Activated CD4-positive, alpha-beta T cell treated with anti-CD3 and anti-CD28 coated beads for 36 hours (primary cell): ENCODE measurements at regions of chr7 and their contacts with region 1.

Region 1: DNA sequence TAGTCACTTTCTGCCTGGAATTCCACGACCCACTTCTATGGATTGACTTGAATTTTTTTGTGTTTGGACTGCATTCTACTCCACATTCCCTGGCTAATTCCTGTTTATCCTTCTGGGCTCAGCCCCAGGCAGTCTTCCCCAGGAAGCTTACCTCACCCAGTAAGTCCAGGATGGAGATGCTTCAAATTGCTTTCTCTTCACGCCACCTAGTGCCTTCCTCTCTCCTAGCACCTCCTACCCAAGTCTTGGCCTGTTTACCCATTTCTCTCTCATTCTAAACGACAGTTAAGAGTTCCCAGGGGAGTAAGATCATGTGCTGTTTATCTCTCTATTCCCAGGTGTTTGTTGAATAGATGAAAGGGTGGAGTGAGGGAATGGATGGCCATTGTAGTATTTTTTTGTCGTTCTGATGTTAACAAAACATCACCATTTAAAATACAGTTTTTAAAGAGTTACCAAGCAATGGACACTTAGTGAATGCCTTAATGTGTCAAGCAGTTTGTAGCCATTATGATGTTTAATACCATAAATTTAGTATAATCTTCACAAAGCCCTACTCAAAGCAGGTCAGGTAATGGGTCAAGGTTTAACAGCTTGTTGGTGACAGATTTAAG is 45.5 kb upstream of the TARP start:
- DNase-seq: peak; percentile 22
- ATAC-seq: peak; percentile 77
- H3K4me3 Mint-ChIP-seq: no peak overlapping the region
- H3K27ac Mint-ChIP-seq: no peak overlapping the region
- H3K4me1 Mint-ChIP-seq: peaks cover 18% of the 10 kb centered on the region
- H3K27me3 Mint-ChIP-seq: no peaks in the 10 kb centered on the region

Region 2: GRCh38 chr7:38107486-38107893 is 211.4 kb before region 1 on chr7:
- CTCF ChIA-PET with region 1: no interaction called
- POLR2A ChIA-PET with region 1: no interaction called
- intact Hi-C with region 1: loop called (anchors 2 kb)
- DNase-seq: peak; percentile 80
- ATAC-seq: peak; percentile 85
- H3K4me3 Mint-ChIP-seq: no peak overlapping the region
- H3K27ac Mint-ChIP-seq: no peak overlapping the region
- H3K4me1 Mint-ChIP-seq: no peaks in the 10 kb centered on the region
- H3K27me3 Mint-ChIP-seq: peaks cover 16% of the 10 kb centered on the region

Region 3: DNA sequence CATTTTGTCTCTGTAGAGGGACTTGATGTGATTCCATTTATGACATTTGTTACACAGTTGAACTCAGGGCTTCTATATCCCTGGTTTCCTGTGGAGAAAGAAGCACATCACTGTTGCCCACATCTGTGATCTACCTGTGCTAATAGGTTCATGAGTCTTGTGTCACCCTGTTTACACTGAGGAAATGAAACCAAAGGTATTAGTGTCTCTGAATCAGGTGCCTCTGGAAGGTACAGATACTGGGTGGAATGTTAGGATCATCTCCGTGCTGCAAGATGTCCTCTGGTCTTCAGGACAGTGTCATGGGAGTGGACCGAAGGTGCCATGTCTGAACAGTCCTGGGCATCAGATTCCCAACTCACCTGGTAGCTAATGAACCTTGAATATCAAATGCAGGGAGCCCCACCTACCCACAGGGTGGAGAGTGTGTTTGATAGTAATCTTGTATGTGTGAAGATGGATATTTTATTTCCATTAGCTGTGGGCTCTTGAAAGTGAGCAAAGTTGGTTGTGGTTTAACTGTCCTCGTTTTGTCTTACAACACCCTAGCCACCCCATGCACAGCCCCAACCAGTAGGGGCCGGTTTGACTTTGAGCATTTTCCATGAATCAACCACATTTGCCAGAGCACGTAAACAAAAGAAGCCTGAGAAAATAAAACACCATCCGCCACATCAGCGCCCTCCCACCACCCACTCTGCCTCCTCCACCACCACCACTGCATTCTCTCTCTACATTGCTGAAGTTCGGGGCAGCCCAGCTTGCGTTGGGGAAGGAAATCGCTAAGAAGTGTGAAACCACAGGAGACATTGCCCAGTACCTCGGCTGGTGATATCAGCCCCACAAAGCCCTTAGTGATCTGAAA is 86.2 kb before region 1 on chr7:
- CTCF ChIA-PET with region 1: no interaction called
- POLR2A ChIA-PET with region 1: no interaction called
- intact Hi-C with region 1: loop called in 1 of 2 experiments (anchors 5 kb)
- DNase-seq: peak; percentile 84
- ATAC-seq: peak; percentile 88
- H3K4me3 Mint-ChIP-seq: peak overlapping the region; percentile 50
- H3K27ac Mint-ChIP-seq: peak overlapping the region; percentile 71
- H3K4me1 Mint-ChIP-seq: peaks cover 39% of the 10 kb centered on the region
- H3K27me3 Mint-ChIP-seq: no peaks in the 10 kb centered on the region